ENCODE measurements at regions of chr14 and their contacts with region 1.

Region 1: GRCh38 chr14:35438910-35439713 is 34.6 kb upstream of the NFKBIA start:
- DNase-seq: no peak
- ATAC-seq: no peak
- H3K4me3 Mint-ChIP-seq: no peak overlapping the region
- H3K27ac Mint-ChIP-seq: no peak overlapping the region
- H3K4me1 Mint-ChIP-seq: peaks cover 8% of the 10 kb centered on the region
- H3K27me3 Mint-ChIP-seq: peaks cover 4% of the 10 kb centered on the region

Region 2: GRCh38 chr14:35687335-35687939 is 248.3 kb after region 1 on chr14:
- CTCF ChIA-PET with region 1: interaction called, 23 read pairs
- DNase-seq: peak; percentile 58
- ATAC-seq: no peak
- H3K4me3 Mint-ChIP-seq: no peak overlapping the region
- H3K27ac Mint-ChIP-seq: no peak overlapping the region
- H3K4me1 Mint-ChIP-seq: peaks cover 22% of the 10 kb centered on the region
- H3K27me3 Mint-ChIP-seq: no peaks in the 10 kb centered on the region

Measured in activated CD8-positive, alpha-beta memory T cell treated with anti-CD3 and anti-CD28 coated beads, Interleukin-2, amount 10 ng/mL, durations not matched to agents 7 days and 5 days (primary cell).